Heart left ventricle (tissue), 16 donors: ENCODE measurements at regions of chr15 and their contacts with region 1.

Region 1: DNA sequence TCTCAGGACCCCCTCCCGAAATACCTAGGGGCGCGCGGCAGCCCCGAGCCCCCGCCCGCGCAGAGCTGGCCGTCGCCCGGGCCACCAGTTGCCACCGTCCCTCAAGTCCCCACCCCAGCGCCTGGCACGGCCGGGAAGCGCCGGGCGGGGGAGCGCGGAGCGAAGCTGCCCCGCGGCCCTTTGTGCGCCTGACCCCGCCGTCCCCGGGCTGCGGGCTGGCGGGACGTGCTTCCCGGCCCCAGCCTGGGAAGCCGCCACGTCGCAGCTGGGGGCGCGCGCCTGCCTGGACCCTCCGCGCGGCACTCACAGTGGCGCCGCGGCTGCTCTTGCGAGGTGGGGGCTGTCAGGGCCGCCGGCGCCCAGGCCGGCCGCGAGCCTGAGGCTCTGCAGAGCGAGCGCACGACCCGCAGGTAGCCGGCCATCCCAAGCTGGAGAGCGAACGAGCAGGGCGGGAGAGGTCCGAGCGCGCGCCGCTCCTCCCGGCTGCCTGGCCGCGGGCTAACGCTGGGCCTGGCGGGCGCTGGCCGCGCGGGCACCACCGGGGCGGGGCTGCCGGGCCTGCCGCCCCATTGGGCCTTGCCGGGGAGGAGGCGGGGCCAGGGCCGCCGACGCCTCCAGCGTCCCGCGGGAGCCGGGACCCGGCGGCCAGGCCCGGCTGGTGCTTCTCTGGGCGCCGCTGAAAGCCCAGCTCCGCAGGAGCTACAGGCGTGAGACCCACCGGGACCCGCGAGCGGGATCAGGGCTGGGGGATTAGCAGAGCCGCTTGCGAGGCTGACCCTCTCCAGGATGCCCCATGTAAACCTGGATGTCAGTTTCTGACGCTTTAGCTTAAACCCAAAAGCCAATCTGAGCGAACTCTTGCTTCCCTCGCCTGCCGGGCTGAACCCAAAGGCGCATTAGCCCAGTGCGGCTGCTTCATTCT is at the start of gene IDH2:
- DNase-seq: peak; percentile 85 to 93 (median 87)
- ATAC-seq: peak; percentile 67 to 89 (median 78)
- H3K4me3 ChIP-seq: peak within 1 kb of the TSS; percentile 70 to 98 (median 93)
- H3K27ac ChIP-seq: peak within 1 kb of the TSS; percentile 91 to 100 (median 98)
- H3K4me1 ChIP-seq: peaks cover 2 to 79% (median 49%) of the 10 kb centered on the region in 12 donors
- H3K27me3 ChIP-seq: no peaks in the 10 kb centered on the region
- CTCF ChIP-seq: peak in 2 of 12 donors; percentile 5 to 13
- POLR2A ChIP-seq: peak; percentile 94 to 99
- total RNA-seq, gene IDH2: 573 to 1,258 (median 787) TPM

Region 2: GRCh38 chr15:89543389-89543788 is 558.8 kb before region 1 on chr15:
- intact Hi-C with region 1: no loop called
- DNase-seq: no peak
- ATAC-seq: no peak
- H3K4me3 ChIP-seq: no peak overlapping the region
- H3K27ac ChIP-seq: no peak overlapping the region
- H3K4me1 ChIP-seq: no peaks in the 10 kb centered on the region
- H3K27me3 ChIP-seq: peaks cover 0 to 8% (median 0%) of the 10 kb centered on the region in 9 donors
- CTCF ChIP-seq: no peak
- POLR2A ChIP-seq: no peak

Region 3: GRCh38 chr15:90126457-90127435 is 24.5 kb after region 1 on chr15:
- intact Hi-C with region 1: loop called in 1 of 10 experiments (anchors 2 kb)
- DNase-seq: peak; percentile 63 to 90 (median 74)
- ATAC-seq: peak; percentile 81 to 95 (median 91)
- H3K4me3 ChIP-seq: no peak overlapping the region
- H3K27ac ChIP-seq: peak overlapping the region; percentile 30 to 89 (median 77)
- H3K4me1 ChIP-seq: peaks cover 0 to 10% (median 2%) of the 10 kb centered on the region in 12 donors
- H3K27me3 ChIP-seq: no peaks in the 10 kb centered on the region
- CTCF ChIP-seq: no peak
- POLR2A ChIP-seq: no peak

Region 4: GRCh38 chr15:90221246-90221900 is 119.1 kb after region 1 on chr15:
- intact Hi-C with region 1: loop called in 1 of 10 experiments (anchors 5 kb)
- DNase-seq: peak; percentile 80 to 85 (median 82)
- ATAC-seq: peak; percentile 55 to 87 (median 80)
- H3K4me3 ChIP-seq: no peak overlapping the region
- H3K27ac ChIP-seq: peak overlapping the region in 8 of 12 donors; percentile 25 to 62 (median 50)
- H3K4me1 ChIP-seq: peaks cover 0 to 14% (median 8%) of the 10 kb centered on the region in 12 donors
- H3K27me3 ChIP-seq: no peaks in the 10 kb centered on the region
- CTCF ChIP-seq: peak; percentile 62 to 89 (median 72)
- POLR2A ChIP-seq: no peak